CD8-positive, alpha-beta T cell (primary cell): ENCODE measurements at regions of chr9 and their contacts with region 1.

Region 1: DNA sequence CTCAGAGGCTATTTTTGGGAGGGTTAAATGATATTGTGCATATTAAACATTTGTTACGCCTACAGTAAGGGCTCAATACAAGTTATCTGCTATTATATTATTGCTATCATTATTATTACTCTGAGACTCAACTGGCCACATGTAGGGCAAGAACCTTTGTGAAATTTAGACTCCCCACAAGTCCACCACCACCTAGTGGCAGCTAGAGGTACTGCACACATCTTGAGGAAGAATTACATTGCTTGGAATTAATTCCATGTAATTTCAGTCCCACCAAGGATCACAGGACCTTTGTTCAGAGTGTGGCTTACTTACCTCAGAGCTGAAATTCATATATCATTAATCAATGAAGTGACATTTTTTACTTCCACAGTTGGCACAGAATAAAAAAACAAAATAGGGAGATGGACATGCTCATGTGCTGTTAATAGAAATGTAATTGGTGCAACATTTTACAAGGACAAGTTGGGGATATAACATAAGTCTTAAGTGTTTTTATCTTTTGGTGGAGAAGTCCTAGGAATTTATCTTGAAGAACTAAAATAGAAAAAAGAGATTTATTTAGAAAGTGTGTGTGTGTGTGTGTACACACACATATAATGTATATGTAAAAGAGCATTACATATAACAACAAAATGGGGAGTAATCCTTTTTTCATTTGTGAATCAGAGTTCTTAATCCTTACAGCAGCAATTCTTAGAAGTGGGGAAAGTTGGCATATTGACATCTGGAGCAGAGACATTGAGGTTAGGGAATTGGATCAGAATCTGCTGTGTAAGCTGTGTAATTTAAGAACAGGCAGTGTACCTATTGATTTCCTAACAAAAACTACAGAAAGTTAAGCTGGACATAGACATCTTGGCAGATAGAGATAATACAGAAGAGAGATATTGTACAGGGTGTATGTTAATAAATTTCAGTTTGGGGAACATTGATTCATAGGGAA is 11.2 kb downstream of the MSANTD3 start:
- DNase-seq: peak; percentile 33 to 77 (median 72)
- ATAC-seq: peak; percentile 80
- H3K4me3 ChIP-seq: no peak overlapping the region
- H3K4me3 Mint-ChIP-seq: no peak overlapping the region
- H3K27ac ChIP-seq: no peak overlapping the region
- H3K27ac Mint-ChIP-seq: no peak overlapping the region
- H3K4me1 ChIP-seq: no peaks in the 10 kb centered on the region
- H3K4me1 Mint-ChIP-seq: peaks cover 2% of the 10 kb centered on the region
- H3K27me3 ChIP-seq: no peaks in the 10 kb centered on the region
- H3K27me3 Mint-ChIP-seq: no peaks in the 10 kb centered on the region
- CTCF ChIP-seq: peak; percentile 90

Region 2: GRCh38 chr9:98796364-98797101 is 1641.6 kb before region 1 on chr9 and contains the start of gene ANKS6:
- CTCF ChIA-PET with region 1: no interaction called
- POLR2A ChIA-PET with region 1: no interaction called
- intact Hi-C with region 1: loop called in 1 of 2 experiments (anchors 10 kb)
- DNase-seq: peak; percentile 63 to 91 (median 85)
- ATAC-seq: peak; percentile 92
- H3K4me3 ChIP-seq: peak within 1 kb of the TSS; percentile 77 to 95
- H3K4me3 Mint-ChIP-seq: peak within 1 kb of the TSS; percentile 88
- H3K27ac ChIP-seq: peak within 1 kb of the TSS; percentile 61 to 66
- H3K27ac Mint-ChIP-seq: peak within 1 kb of the TSS; percentile 85
- H3K4me1 ChIP-seq: peaks cover 15% of the 10 kb centered on the region
- H3K4me1 Mint-ChIP-seq: peaks cover 32% of the 10 kb centered on the region
- H3K27me3 ChIP-seq: no peaks in the 10 kb centered on the region
- H3K27me3 Mint-ChIP-seq: no peaks in the 10 kb centered on the region
- CTCF ChIP-seq: peak; percentile 28
- total RNA-seq, gene ANKS6: 10.6 to 12.7 TPM

Region 3: GRCh38 chr9:99221621-99222415 is 1216.3 kb before region 1 on chr9 and contains the starts of genes ALG2 and SEC61B:
- CTCF ChIA-PET with region 1: no interaction called
- POLR2A ChIA-PET with region 1: no interaction called
- intact Hi-C with region 1: loop called in 1 of 2 experiments (anchors 5 kb)
- DNase-seq: peak; percentile 87 to 96 (median 94)
- ATAC-seq: peak; percentile 88
- H3K4me3 ChIP-seq: peak within 1 kb of the TSS; percentile 79 to 90
- H3K4me3 Mint-ChIP-seq: peak within 1 kb of the TSS; percentile 99
- H3K27ac ChIP-seq: peak within 1 kb of the TSS; percentile 95 to 99
- H3K27ac Mint-ChIP-seq: peak within 1 kb of the TSS; percentile 100
- H3K4me1 ChIP-seq: peaks cover 30% of the 10 kb centered on the region
- H3K4me1 Mint-ChIP-seq: peaks cover 80% of the 10 kb centered on the region
- H3K27me3 ChIP-seq: no peaks in the 10 kb centered on the region
- H3K27me3 Mint-ChIP-seq: no peaks in the 10 kb centered on the region
- CTCF ChIP-seq: no peak
- total RNA-seq, gene ALG2: 21.0 to 24.7 TPM
- total RNA-seq, gene SEC61B: 107 to 108 TPM

Region 4: GRCh38 chr9:99266255-99267023 is 1171.7 kb before region 1 on chr9:
- CTCF ChIA-PET with region 1: no interaction called
- POLR2A ChIA-PET with region 1: no interaction called
- intact Hi-C with region 1: loop called in 1 of 2 experiments (anchors 5 kb)
- DNase-seq: peak; percentile 12 to 73 (median 59)
- ATAC-seq: peak; percentile 58
- H3K4me3 ChIP-seq: peak overlapping the region in 1 of 2 experiments; percentile 18
- H3K4me3 Mint-ChIP-seq: peak overlapping the region; percentile 9
- H3K27ac ChIP-seq: no peak overlapping the region
- H3K27ac Mint-ChIP-seq: no peak overlapping the region
- H3K4me1 ChIP-seq: peaks cover 7% of the 10 kb centered on the region
- H3K4me1 Mint-ChIP-seq: peaks cover 9% of the 10 kb centered on the region
- H3K27me3 ChIP-seq: no peaks in the 10 kb centered on the region
- H3K27me3 Mint-ChIP-seq: peaks cover 2% of the 10 kb centered on the region
- CTCF ChIP-seq: peak; percentile 87

Region 5: DNA sequence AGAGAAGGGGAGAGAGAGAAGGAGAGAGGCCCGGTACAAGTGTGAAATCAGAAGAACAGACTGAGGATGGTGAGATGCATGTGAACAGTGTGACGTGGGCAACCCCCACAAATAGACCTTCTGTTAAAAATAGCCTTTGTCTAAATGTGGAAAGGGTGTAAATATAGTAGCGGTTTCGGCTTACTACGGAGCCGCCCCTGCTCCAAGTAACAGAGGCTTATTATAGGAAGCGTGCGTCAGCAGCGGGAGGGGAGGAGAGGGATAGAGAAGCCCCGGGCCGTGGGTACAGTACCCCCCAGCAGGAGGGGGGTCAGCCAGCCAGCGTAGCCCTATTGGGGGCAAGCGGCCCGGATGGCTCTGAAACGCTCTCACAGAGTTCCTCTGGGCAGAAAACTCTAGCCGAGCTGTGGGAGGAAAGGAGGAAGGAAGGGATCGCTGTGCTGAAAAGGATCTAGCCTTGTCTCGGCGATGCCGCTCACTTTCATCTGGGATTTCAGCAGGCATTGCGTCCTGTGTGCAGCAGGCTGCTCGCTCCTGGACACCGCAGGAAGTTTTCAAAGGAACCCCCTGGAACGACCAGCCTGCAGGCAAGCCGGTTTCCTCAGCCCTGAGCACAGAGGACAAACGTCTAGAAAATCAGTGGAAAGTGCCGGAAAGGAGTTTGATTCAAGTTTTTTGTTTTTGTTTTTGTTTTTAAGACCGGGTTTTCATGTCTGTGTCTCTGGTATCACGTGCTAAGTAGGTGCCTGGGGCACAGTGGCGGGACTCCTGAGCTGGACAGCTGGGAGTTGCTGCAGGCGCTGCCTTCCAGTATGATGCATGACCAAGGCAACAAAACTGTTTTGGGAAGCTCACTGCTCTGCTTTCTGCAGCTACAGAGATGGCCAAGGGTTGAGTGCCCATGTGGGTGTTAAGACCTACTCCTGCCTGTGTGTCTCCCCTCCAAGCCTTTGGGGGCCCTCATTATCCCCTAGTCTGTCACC is 1069.5 kb before region 1 on chr9:
- CTCF ChIA-PET with region 1: no interaction called
- POLR2A ChIA-PET with region 1: no interaction called
- intact Hi-C with region 1: no loop called
- DNase-seq: no peak
- ATAC-seq: no peak
- H3K4me3 ChIP-seq: no peak overlapping the region
- H3K4me3 Mint-ChIP-seq: no peak overlapping the region
- H3K27ac ChIP-seq: no peak overlapping the region
- H3K27ac Mint-ChIP-seq: no peak overlapping the region
- H3K4me1 ChIP-seq: no peaks in the 10 kb centered on the region
- H3K4me1 Mint-ChIP-seq: peaks cover 8% of the 10 kb centered on the region
- H3K27me3 ChIP-seq: peaks cover 0 to 3% of the 10 kb centered on the region in 2 experiments
- H3K27me3 Mint-ChIP-seq: peaks cover 37% of the 10 kb centered on the region
- CTCF ChIP-seq: no peak

Region 6: DNA sequence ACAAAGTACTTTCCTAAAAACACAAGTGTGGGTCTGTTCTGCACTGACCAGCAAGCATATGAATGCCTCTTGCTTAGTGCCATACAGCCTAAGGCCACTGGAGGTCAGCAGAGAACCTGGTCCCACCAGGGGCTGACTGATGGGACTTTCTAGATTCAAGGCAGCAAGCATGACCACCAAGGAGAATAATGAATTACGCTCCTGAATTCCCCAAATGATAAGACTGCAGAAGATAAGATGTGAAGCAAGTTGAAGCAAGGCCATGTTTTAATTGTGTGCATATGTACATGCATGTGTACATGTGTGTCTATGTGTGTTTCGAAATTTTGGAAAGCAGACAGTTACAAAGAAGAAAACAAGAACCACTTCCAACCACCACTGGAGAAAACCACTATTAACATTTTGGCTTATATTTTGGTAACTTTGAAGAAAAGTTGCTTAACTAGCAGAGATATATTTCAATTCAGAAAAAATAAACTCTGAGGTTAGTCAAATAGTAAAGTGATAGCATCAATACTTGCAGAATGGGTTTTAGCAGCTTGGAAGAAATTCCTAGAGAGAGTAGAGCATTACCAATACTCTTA is 409.8 kb before region 1 on chr9:
- CTCF ChIA-PET with region 1: interaction called, 10 read pairs
- POLR2A ChIA-PET with region 1: no interaction called
- intact Hi-C with region 1: loop called (anchors 1 to 2 kb)
- DNase-seq: peak; percentile 47 to 75 (median 66)
- ATAC-seq: peak; percentile 97
- H3K4me3 ChIP-seq: no peak overlapping the region
- H3K4me3 Mint-ChIP-seq: no peak overlapping the region
- H3K27ac ChIP-seq: no peak overlapping the region
- H3K27ac Mint-ChIP-seq: no peak overlapping the region
- H3K4me1 ChIP-seq: no peaks in the 10 kb centered on the region
- H3K4me1 Mint-ChIP-seq: peaks cover 3% of the 10 kb centered on the region
- H3K27me3 ChIP-seq: no peaks in the 10 kb centered on the region
- H3K27me3 Mint-ChIP-seq: no peaks in the 10 kb centered on the region
- CTCF ChIP-seq: peak; percentile 73

Region 7: DNA sequence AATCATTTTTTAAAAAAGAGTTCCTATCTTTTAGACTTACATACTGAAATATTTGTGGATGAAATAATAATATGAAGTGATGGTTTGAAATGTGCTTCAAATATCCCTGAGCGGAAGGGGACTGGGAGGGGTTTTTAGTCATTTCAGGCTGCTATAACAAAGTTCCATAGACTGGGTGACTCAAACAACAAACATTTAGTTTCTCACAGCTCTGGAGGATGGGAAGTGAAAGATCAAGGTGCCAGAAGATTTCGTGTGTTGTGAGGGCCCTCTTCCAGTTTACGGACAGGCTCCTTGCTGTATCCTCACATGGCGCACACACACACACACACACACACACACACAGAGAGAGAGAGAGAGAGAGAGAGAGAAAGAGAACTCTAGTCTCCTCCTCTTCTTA is 58.3 kb before region 1 on chr9:
- CTCF ChIA-PET with region 1: no interaction called
- POLR2A ChIA-PET with region 1: no interaction called
- intact Hi-C with region 1: no loop called
- DNase-seq: no peak
- ATAC-seq: no peak
- H3K4me3 ChIP-seq: no peak overlapping the region
- H3K4me3 Mint-ChIP-seq: no peak overlapping the region
- H3K27ac ChIP-seq: no peak overlapping the region
- H3K27ac Mint-ChIP-seq: no peak overlapping the region
- H3K4me1 ChIP-seq: no peaks in the 10 kb centered on the region
- H3K4me1 Mint-ChIP-seq: no peaks in the 10 kb centered on the region
- H3K27me3 ChIP-seq: no peaks in the 10 kb centered on the region
- H3K27me3 Mint-ChIP-seq: no peaks in the 10 kb centered on the region
- CTCF ChIP-seq: no peak

Region 8: DNA sequence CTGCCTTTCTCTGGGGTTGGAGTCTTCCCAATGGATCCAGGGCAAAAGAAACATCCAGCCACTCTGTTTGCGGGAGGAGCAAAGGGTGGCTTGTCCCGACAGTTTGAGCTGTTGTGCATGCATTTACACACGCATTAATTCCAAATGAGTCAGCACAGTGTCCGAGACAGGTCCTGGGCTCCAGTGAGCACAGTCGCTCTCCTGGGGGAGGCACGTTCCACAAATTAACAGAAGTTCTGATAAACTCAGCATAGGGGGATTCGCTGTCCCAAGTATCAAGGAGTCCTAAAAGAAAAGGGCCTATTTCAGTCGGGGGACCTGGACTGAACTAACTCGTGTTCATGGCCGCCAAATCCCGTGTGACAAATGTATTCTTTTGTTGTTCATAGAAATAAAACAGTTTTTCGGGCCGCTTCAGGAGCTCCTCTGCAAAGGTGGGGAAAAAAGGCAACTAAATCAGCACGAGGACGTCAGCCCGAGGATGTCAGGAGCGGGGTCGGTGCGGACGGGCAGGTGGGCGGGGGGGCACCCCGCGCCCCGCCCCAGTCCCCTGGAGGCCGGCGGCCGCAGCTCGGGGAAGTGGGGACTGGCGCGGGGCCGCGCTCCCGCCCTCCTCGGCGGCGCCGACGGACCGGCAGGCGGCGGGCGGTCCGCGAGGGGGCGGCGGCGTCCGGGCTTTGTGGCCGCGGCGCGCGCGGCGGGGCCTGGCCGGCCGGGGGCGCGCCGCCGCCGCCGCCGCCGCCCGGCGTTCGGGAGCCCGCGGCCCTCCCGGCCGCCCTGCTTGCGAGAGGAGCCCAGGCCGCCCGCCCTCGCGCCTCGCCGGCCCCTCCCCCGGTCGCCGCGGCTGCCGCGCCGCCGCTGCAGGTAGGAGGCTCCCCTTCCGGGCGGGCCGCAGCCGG is 11.4 kb before region 1 on chr9 and contains the start of gene MSANTD3:
- CTCF ChIA-PET with region 1: interaction called, 7 read pairs
- POLR2A ChIA-PET with region 1: no interaction called
- intact Hi-C with region 1: loop called in 1 of 2 experiments (anchors 1 kb)
- DNase-seq: peak; percentile 20 to 78 (median 58)
- ATAC-seq: peak; percentile 84
- H3K4me3 ChIP-seq: peak within 1 kb of the TSS; percentile 69 to 74
- H3K4me3 Mint-ChIP-seq: peak within 1 kb of the TSS; percentile 97
- H3K27ac ChIP-seq: peak within 1 kb of the TSS; percentile 31 to 35
- H3K27ac Mint-ChIP-seq: peak within 1 kb of the TSS; percentile 95
- H3K4me1 ChIP-seq: peaks cover 18% of the 10 kb centered on the region
- H3K4me1 Mint-ChIP-seq: peaks cover 35% of the 10 kb centered on the region
- H3K27me3 ChIP-seq: no peaks in the 10 kb centered on the region
- H3K27me3 Mint-ChIP-seq: peaks cover 4% of the 10 kb centered on the region
- CTCF ChIP-seq: no peak
- total RNA-seq, gene MSANTD3: 10.2 to 10.8 TPM

Region 9: DNA sequence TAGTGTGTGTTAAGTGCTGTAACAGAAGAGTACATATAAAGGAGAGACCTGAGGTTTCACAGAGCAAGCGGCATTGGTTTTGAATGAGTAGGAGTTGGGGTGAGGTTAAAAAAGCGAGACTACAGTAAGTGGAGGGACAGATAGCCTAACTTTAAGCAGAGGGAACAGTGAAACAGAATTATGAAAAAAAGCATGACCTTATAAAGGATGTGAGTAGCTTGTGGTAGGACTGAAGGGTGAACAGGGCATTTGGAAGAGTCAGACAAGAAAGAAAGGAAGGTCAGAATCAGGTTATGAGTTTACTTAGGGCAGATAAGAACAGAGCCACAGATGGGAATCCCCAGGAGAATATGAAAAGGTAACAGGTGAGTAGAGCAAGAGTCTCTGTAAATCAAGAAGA is 11.3 kb after region 1 on chr9:
- CTCF ChIA-PET with region 1: interaction called, 15 read pairs
- POLR2A ChIA-PET with region 1: no interaction called
- intact Hi-C with region 1: no loop called
- DNase-seq: no peak
- ATAC-seq: no peak
- H3K4me3 ChIP-seq: no peak overlapping the region
- H3K4me3 Mint-ChIP-seq: no peak overlapping the region
- H3K27ac ChIP-seq: no peak overlapping the region
- H3K27ac Mint-ChIP-seq: no peak overlapping the region
- H3K4me1 ChIP-seq: no peaks in the 10 kb centered on the region
- H3K4me1 Mint-ChIP-seq: peaks cover 2% of the 10 kb centered on the region
- H3K27me3 ChIP-seq: no peaks in the 10 kb centered on the region
- H3K27me3 Mint-ChIP-seq: no peaks in the 10 kb centered on the region
- CTCF ChIP-seq: no peak